ENCODE measurements at regions of chr3 and their contacts with region 1.

Region 1: DNA sequence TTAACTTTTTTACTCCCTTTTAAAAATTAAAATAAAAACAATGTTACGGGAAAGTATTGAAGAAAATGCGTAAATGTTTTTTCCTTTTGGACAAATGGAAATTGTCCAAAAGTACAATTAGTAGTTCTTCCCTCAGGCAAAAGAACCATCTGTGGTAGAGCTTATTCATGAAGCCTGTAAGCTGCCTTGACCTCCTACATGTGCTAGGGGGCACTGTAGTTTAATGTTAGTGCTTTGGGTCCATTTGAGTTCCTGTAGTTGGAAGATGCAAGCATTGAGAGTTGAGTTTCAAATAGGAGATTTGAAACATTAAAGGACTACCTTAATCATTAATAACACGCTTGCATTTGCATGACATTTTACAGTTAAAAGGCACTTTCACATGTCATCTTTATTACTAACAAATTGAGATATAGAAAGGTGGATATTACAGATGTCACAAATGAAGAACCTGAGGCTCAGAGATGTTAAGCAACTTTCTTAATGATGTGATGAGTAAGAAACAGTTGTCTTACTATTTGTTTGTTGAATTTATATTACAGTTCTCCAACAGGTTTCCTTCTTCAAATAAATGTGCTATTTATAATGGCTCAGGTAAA is 1.8 kb upstream of the ZNF385D start:
- DNase-seq: no peak
- ATAC-seq: peak; percentile 51 to 76 (median 72)
- H3K4me3 ChIP-seq: no peak overlapping the region
- H3K27ac ChIP-seq: no peak overlapping the region
- H3K4me1 ChIP-seq: no peaks in the 10 kb centered on the region
- H3K27me3 ChIP-seq: peaks cover 0 to 12% (median 0%) of the 10 kb centered on the region in 3 donors
- CTCF ChIP-seq: peak; percentile 70

Region 2: GRCh38 chr3:21839592-21839991 is 86.7 kb after region 1 on chr3:
- intact Hi-C with region 1: loop called in 1 of 2 experiments (anchors 5 kb)
- DNase-seq: no peak
- ATAC-seq: peak; percentile 72 to 81 (median 78)
- H3K4me3 ChIP-seq: no peak overlapping the region
- H3K27ac ChIP-seq: peak overlapping the region; percentile 11
- H3K4me1 ChIP-seq: no peaks in the 10 kb centered on the region
- H3K27me3 ChIP-seq: no peaks in the 10 kb centered on the region
- CTCF ChIP-seq: peak; percentile 54

Region 3: GRCh38 chr3:21894459-21895340 is 141.9 kb after region 1 on chr3:
- intact Hi-C with region 1: loop called (anchors 2 to 5 kb)
- DNase-seq: no peak
- ATAC-seq: peak in 3 of 4 donors; percentile 11 to 65 (median 41)
- H3K4me3 ChIP-seq: no peak overlapping the region
- H3K27ac ChIP-seq: no peak overlapping the region
- H3K4me1 ChIP-seq: peaks cover 4% of the 10 kb centered on the region
- H3K27me3 ChIP-seq: no peaks in the 10 kb centered on the region
- CTCF ChIP-seq: peak; percentile 67

Region 4: GRCh38 chr3:22117751-22118346 is 365.0 kb after region 1 on chr3:
- intact Hi-C with region 1: loop called in 1 of 2 experiments (anchors 5 kb)
- DNase-seq: no peak
- ATAC-seq: peak in 1 of 4 donors; percentile 63
- H3K4me3 ChIP-seq: no peak overlapping the region
- H3K27ac ChIP-seq: no peak overlapping the region
- H3K4me1 ChIP-seq: peaks cover 4% of the 10 kb centered on the region
- H3K27me3 ChIP-seq: no peaks in the 10 kb centered on the region
- CTCF ChIP-seq: peak; percentile 77